IMR-90 (cell line): ENCODE measurements at regions of chr19 and their contacts with region 1.

Region 1: DNA sequence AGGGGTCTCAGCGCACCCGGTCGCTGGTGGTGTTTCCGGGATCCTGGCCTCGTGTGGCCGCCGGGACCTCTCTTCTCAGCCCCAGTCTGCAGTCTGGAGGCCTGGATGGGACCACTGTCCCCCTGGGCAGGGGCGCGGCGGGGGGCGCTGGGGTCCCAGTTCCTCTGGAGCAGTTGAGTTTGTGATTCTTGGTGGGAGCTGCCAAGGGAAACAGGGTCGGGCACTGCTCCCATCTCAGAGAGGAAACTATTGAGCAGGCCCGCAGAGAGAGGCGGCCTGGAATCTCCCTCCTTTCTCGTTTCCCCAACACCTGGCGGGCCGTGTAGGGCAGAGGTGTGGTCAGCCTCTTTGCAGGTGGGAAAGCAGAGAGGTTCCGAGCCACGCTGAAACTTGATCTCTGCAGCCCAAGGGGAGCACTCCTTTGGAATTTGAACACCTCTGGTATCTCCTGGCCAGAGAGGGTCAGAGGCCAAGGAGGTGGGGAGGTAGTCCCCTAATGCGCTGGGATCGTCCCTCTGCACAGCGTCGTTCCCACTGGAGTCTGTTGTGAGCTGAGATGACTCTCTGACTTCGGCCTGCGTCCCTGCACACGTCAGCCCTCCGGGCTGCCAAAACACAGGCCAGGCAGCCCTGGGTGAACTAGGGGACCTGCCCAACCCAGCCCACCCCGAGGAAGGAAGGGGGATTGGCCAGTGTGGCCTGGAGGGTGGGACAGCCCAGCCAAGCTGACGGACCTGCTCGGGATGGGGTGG is 741 bp downstream of the PLEKHF1 start:
- DNase-seq: peak; percentile 66
- ATAC-seq: peak; percentile 21
- H3K4me3 ChIP-seq: peak overlapping the region; percentile 90
- H3K27ac ChIP-seq: peak overlapping the region; percentile 84
- H3K4me1 ChIP-seq: peaks cover 25% of the 10 kb centered on the region
- H3K27me3 ChIP-seq: no peaks in the 10 kb centered on the region
- CTCF ChIP-seq: no peak
- POLR2A ChIP-seq: peak; percentile 32; the same call in 1 of the 2 replicates
- RAD21 ChIP-seq: no peak

Region 2: DNA sequence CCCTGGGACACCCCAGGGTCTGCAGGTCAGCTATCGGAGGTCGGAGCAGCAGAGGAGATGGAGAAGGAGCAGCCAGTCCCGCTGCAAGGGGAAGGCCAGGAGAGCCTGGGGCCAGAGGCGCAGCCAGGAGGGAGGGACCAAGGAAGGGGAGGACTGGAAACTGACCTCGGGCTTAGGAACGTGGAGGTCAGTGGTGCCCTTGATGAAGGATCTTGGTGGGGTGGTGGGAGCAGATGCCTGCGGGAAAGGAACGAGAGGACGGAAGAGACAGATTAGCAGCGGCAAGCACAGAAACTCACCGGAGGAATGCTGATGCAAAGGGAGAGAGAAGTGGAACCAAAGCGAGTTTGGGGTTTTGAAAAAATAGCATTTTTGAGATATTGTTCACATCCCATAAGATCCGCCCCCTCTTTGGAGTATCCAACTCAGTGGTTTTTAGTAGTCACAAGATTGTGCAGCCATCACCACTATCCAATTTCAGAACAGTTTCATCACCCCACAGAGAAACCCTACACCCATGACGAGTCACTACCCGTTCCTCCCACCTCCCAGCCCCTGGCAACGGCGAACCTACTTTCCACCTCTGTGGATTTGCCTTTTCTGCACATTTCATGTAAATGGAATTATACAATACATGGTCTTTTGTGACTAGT is 21.4 kb after region 1 on chr19:
- CTCF ChIA-PET with region 1: no interaction called
- POLR2A ChIA-PET with region 1: no interaction called
- dilution Hi-C with region 1: no loop called
- in situ Hi-C with region 1: no loop called
- intact Hi-C with region 1: loop called (anchors 2 kb)
- DNase-seq: peak; percentile 98
- ATAC-seq: peak; percentile 93
- H3K4me3 ChIP-seq: peak overlapping the region; percentile 38; the same call in 1 of the 2 replicates
- H3K27ac ChIP-seq: peak overlapping the region; percentile 99
- H3K4me1 ChIP-seq: peaks cover 7% of the 10 kb centered on the region
- H3K27me3 ChIP-seq: no peaks in the 10 kb centered on the region
- CTCF ChIP-seq: no peak
- POLR2A ChIP-seq: peak; percentile 49; the same call in 1 of the 2 replicates
- RAD21 ChIP-seq: no peak

Region 3: GRCh38 chr19:29702161-29702962 is 36.4 kb after region 1 on chr19:
- CTCF ChIA-PET with region 1: no interaction called
- POLR2A ChIA-PET with region 1: no interaction called
- dilution Hi-C with region 1: no loop called
- in situ Hi-C with region 1: no loop called
- intact Hi-C with region 1: no loop called
- DNase-seq: no peak
- ATAC-seq: no peak
- H3K4me3 ChIP-seq: no peak overlapping the region
- H3K27ac ChIP-seq: no peak overlapping the region
- H3K4me1 ChIP-seq: no peaks in the 10 kb centered on the region
- H3K27me3 ChIP-seq: no peaks in the 10 kb centered on the region
- CTCF ChIP-seq: no peak
- POLR2A ChIP-seq: no peak
- RAD21 ChIP-seq: no peak

Region 4: GRCh38 chr19:29714953-29715700 is 49.1 kb after region 1 on chr19 and contains the start of gene C19orf12:
- CTCF ChIA-PET with region 1: interaction called, 7 read pairs
- POLR2A ChIA-PET with region 1: interaction called, 3 read pairs
- dilution Hi-C with region 1: no loop called
- in situ Hi-C with region 1: no loop called
- intact Hi-C with region 1: loop called (anchors 2 kb)
- DNase-seq: peak; percentile 23
- ATAC-seq: peak; percentile 82
- H3K4me3 ChIP-seq: peak within 1 kb of the TSS; percentile 91
- H3K27ac ChIP-seq: peak within 1 kb of the TSS; percentile 93
- H3K4me1 ChIP-seq: peaks cover 6% of the 10 kb centered on the region
- H3K27me3 ChIP-seq: no peaks in the 10 kb centered on the region
- CTCF ChIP-seq: no peak
- POLR2A ChIP-seq: peak; percentile 84
- RAD21 ChIP-seq: no peak
- total RNA-seq, gene C19orf12: 16.3 and 19.2 TPM in 2 replicates

Region 5: DNA sequence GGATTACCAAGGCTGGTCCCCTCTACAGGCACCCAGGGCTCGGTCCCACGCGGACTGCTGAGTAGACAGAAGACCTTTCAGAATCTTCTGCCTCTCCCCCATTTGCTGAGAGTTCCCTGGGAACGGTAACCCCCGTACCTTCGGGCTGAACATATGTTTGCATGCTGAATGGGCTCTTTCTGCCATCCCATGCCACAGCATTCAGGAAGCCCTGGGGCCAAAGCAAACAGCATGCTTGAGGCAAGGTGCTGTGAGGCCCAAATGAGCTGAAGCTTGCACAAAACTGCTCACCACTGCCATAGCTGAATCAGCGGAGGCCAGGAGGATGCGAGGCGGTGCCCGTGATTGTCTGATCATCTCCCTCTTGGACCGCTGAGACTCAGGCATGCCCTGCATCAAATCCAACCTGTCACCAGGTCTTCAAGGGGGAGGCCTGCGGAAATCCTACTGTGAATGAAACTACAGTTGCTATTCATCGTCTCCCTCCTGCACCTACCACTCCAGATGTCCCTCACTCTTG is 65.4 kb after region 1 on chr19:
- CTCF ChIA-PET with region 1: no interaction called
- POLR2A ChIA-PET with region 1: no interaction called
- dilution Hi-C with region 1: no loop called
- in situ Hi-C with region 1: no loop called
- intact Hi-C with region 1: no loop called
- DNase-seq: no peak
- ATAC-seq: no peak
- H3K4me3 ChIP-seq: no peak overlapping the region
- H3K27ac ChIP-seq: no peak overlapping the region
- H3K4me1 ChIP-seq: no peaks in the 10 kb centered on the region
- H3K27me3 ChIP-seq: peaks cover 15% of the 10 kb centered on the region
- CTCF ChIP-seq: no peak
- POLR2A ChIP-seq: no peak
- RAD21 ChIP-seq: no peak

Region 6: GRCh38 chr19:29779921-29780320 is 113.9 kb after region 1 on chr19:
- CTCF ChIA-PET with region 1: no interaction called
- POLR2A ChIA-PET with region 1: no interaction called
- dilution Hi-C with region 1: no loop called
- in situ Hi-C with region 1: no loop called
- intact Hi-C with region 1: no loop called
- DNase-seq: no peak
- ATAC-seq: no peak
- H3K4me3 ChIP-seq: no peak overlapping the region
- H3K27ac ChIP-seq: no peak overlapping the region
- H3K4me1 ChIP-seq: no peaks in the 10 kb centered on the region; the same call in 1 of the 2 replicates
- H3K27me3 ChIP-seq: peaks cover 2% of the 10 kb centered on the region; the same call in 1 of the 2 replicates
- CTCF ChIP-seq: no peak
- POLR2A ChIP-seq: no peak
- RAD21 ChIP-seq: no peak

Region 7: GRCh38 chr19:29823581-29824325 is 157.8 kb after region 1 on chr19:
- CTCF ChIA-PET with region 1: no interaction called
- POLR2A ChIA-PET with region 1: interaction called, 11 read pairs
- dilution Hi-C with region 1: no loop called
- in situ Hi-C with region 1: no loop called
- intact Hi-C with region 1: no loop called
- DNase-seq: no peak
- ATAC-seq: no peak
- H3K4me3 ChIP-seq: no peak overlapping the region
- H3K27ac ChIP-seq: no peak overlapping the region
- H3K4me1 ChIP-seq: no peaks in the 10 kb centered on the region
- H3K27me3 ChIP-seq: no peaks in the 10 kb centered on the region
- CTCF ChIP-seq: no peak
- POLR2A ChIP-seq: no peak
- RAD21 ChIP-seq: no peak